Gastrocnemius medialis (tissue), 4 donors: ENCODE measurements at regions of chr21 and their contacts with region 1.

Region 1: DNA sequence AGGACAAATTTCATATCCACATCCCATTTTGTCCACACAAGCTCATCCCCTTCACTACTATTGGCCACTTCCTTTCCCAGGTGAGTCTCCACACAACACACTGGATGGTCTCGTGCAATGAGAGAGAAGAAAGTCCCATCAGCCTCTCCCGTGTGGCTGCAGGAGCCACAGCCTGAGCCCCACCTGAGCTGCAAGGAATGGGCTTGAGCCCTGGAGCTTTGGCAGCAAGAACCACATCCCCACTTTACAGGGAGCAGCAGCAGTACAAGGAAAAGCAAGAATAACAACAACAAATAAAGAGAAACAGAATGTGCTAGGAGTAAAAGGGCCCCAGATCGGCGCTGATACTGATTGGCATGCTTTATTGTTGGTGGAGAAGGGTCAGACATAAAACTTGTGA is 117.7 kb downstream of the TPTE start:
- DNase-seq: no peak
- ATAC-seq: no peak
- H3K4me3 ChIP-seq: no peak overlapping the region
- H3K27ac ChIP-seq: no peak overlapping the region
- H3K4me1 ChIP-seq: no peaks in the 10 kb centered on the region
- H3K27me3 ChIP-seq: no peaks in the 10 kb centered on the region
- CTCF ChIP-seq: no peak
- POLR2A ChIP-seq: no peak

Region 2: GRCh38 chr21:10575311-10575667 is 63.8 kb before region 1 on chr21:
- in situ Hi-C with region 1: loop called in 1 of 4 experiments (anchors 10 kb)
- intact Hi-C with region 1: no loop called
- DNase-seq: no peak
- ATAC-seq: no peak
- H3K4me3 ChIP-seq: no peak overlapping the region
- H3K27ac ChIP-seq: no peak overlapping the region
- H3K4me1 ChIP-seq: no peaks in the 10 kb centered on the region
- H3K27me3 ChIP-seq: no peaks in the 10 kb centered on the region
- CTCF ChIP-seq: no peak
- POLR2A ChIP-seq: no peak

Region 3: GRCh38 chr21:10616535-10616934 is 22.6 kb before region 1 on chr21:
- in situ Hi-C with region 1: no loop called
- intact Hi-C with region 1: no loop called
- DNase-seq: no peak
- ATAC-seq: no peak
- H3K4me3 ChIP-seq: no peak overlapping the region
- H3K27ac ChIP-seq: no peak overlapping the region
- H3K4me1 ChIP-seq: no peaks in the 10 kb centered on the region
- H3K27me3 ChIP-seq: no peaks in the 10 kb centered on the region
- CTCF ChIP-seq: no peak
- POLR2A ChIP-seq: no peak